ENCODE measurements at regions of chr7 and their contacts with region 1.

Region 1: GRCh38 chr7:129091484-129092002 is 36.6 kb upstream of the TNPO3 start:
- DNase-seq: peak; percentile 70 to 91 (median 88)
- ATAC-seq: peak; percentile 84 to 87
- H3K4me3 ChIP-seq: no peak overlapping the region
- H3K27ac ChIP-seq: no peak overlapping the region
- H3K4me1 ChIP-seq: no peaks in the 10 kb centered on the region
- H3K27me3 ChIP-seq: no peaks in the 10 kb centered on the region

Region 2: DNA sequence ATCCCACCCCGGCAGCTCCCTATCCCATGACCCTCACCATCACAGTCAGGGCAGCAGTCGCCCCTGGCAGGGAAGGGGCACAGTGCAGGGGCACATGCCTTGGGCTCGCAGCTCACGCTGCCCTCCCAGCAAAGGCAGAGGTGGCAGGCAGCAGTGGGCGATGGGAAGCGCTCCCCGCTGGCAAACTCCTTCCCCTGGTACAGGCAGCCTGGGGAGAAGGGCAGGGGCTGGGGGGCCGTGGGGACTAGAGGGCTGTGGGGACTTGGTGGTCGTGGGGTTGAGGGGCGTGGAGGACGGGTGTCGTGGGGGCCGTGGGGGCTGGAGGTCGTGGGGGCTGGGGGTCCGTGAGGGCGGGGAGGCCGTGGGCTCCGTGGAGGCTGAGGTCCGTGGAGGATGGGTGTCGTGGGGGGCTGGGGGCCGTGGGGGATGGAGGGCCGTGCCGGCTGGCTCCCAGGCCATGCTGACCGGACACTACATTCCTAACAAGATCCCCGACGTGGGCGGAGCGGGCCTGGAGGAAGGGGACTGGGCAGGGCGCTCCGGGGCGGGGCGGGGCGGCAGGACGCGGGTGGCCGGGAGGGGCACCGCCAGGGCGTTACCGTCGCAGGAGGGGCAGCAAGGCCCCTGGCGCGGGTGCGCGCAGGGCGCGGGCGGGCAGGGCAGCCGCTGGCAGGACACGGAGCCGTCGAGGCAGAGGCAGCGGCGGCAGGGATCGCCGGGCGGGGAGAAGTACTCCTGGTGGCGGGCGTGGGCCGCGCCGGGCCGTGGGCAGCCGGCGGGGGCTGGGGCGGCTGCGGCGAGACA is 201.0 kb before region 1 on chr7:
- intact Hi-C with region 1: loop called in 1 of 4 experiments (anchors 10 kb)
- DNase-seq: peak; percentile 66 to 77 (median 75)
- ATAC-seq: peak; percentile 22 to 66
- H3K4me3 ChIP-seq: peak overlapping the region; percentile 5
- H3K27ac ChIP-seq: no peak overlapping the region
- H3K4me1 ChIP-seq: no peaks in the 10 kb centered on the region
- H3K27me3 ChIP-seq: no peaks in the 10 kb centered on the region

Region 3: GRCh38 chr7:128904381-128905197 is 187.0 kb before region 1 on chr7:
- intact Hi-C with region 1: loop called in 3 of 4 experiments (anchors 5 to 10 kb)
- DNase-seq: peak in 1 of 3 donors; percentile 43
- ATAC-seq: peak; percentile 27 to 31
- H3K4me3 ChIP-seq: no peak overlapping the region
- H3K27ac ChIP-seq: no peak overlapping the region
- H3K4me1 ChIP-seq: no peaks in the 10 kb centered on the region
- H3K27me3 ChIP-seq: no peaks in the 10 kb centered on the region

Region 4: DNA sequence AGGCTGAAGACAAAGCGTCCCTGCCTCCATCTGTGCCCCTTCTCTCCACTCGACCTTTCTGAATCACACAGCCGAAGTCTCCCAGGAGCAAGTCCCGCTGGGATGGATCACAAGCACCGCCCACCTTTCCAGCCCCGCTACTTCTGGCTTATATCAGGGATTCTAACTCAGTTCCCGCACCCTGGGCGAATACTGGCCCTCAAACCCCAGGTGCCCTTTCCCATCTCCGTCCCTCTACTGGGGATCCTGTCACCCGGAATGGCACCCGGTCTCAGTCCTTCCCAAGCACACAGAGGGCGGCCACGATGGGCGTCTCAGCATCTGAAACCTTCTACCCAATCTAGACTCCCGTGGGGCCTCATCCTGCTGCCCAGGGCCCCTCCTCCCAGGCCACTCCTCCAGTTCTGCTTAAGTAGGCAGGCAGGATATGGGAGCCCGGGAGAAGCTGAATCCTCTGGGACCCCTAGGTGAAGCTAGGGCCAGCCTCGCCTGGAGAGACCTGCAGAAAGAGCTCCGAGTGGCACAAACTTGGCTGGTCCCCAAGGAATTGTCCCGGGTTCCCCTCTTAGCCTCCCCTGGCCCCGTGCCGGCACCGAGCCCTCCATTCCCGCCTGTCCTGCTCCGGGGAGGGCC is 181.8 kb before region 1 on chr7:
- intact Hi-C with region 1: loop called in 3 of 4 experiments (anchors 5 to 10 kb)
- DNase-seq: peak; percentile 34 to 69 (median 54)
- ATAC-seq: peak in 1 of 2 donors; percentile 27
- H3K4me3 ChIP-seq: peak overlapping the region; percentile 27
- H3K27ac ChIP-seq: no peak overlapping the region
- H3K4me1 ChIP-seq: no peaks in the 10 kb centered on the region
- H3K27me3 ChIP-seq: no peaks in the 10 kb centered on the region

Measured in right cardiac atrium (tissue), 5 donors.